HepG2 (cell line): ENCODE measurements at regions of chrX and their contacts with region 1.

Region 1: GRCh38 chrX:153609917-153610428 is 11.0 kb upstream of the CCNQ start:
- DNase-seq: peak; percentile 52
- ATAC-seq: peak; percentile 84
- H3K4me3 ChIP-seq: peak overlapping the region; percentile 26 to 58 (median 36); a peak in 4 of 6 replicates
- H3K27ac ChIP-seq: peak overlapping the region; percentile 72
- H3K4me1 ChIP-seq: peaks cover 18% of the 10 kb centered on the region
- H3K27me3 ChIP-seq: no peaks in the 10 kb centered on the region
- CTCF ChIP-seq: peak; percentile 94
- EP300 ChIP-seq: no peak
- POLR2A ChIP-seq: no peak
- RAD21 ChIP-seq: peak; percentile 88

Region 2: GRCh38 chrX:153560000-153560399 is 50.0 kb before region 1 on chrX:
- CTCF ChIA-PET with region 1: no interaction called
- POLR2A ChIA-PET with region 1: no interaction called
- in situ Hi-C with region 1: loop called (anchors 5 kb)
- intact Hi-C with region 1: no loop called
- DNase-seq: no peak
- ATAC-seq: no peak
- H3K4me3 ChIP-seq: no peak overlapping the region
- H3K27ac ChIP-seq: no peak overlapping the region
- H3K4me1 ChIP-seq: peaks cover 4% of the 10 kb centered on the region
- H3K27me3 ChIP-seq: peaks cover 0 to 35% of the 10 kb centered on the region in 2 experiments; a peak in 2 of 5 replicates
- CTCF ChIP-seq: no peak
- EP300 ChIP-seq: no peak
- POLR2A ChIP-seq: no peak
- RAD21 ChIP-seq: no peak

Region 3: DNA sequence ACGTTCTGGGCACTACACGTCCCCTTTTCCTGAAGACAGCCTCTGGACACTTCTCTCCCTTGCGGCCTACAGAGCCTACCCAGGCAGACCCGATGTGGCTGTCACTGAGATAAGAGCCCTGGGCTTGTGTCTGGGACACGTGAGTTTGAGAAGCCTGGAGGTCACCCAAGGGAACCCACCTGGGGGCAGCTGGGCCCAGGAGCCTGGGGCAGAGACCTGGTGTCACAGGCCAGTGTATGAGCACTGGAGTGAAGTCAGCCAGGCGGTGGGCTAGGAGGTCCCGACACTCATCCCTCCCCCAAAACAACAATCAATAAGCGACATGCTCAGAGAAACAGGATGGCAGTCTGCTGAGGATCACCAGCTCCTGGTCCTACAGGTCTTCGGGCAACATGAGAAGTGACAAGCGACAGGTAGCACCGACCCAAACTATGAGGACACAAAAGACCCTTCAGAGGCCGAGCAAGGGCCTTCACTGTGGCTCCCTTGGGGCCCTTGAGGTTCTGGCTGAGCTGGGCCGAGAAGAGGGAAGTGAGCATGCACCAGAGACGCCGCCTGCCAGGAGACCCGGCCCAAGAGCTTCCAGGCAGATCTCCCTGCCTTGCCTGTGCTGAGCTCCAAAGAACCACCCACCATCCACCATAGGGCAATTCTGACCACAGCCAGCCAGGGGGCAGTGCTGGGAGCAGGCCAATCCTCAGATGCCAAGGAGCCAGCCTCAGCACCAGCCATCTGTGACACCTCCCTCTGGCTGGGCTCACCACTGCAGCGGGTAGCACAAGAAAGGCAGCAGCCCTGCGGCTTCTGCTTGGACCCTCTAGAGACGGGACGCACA is 26.0 kb after region 1 on chrX:
- CTCF ChIA-PET with region 1: interaction called, 21 read pairs
- POLR2A ChIA-PET with region 1: interaction called, 13 read pairs
- in situ Hi-C with region 1: no loop called
- intact Hi-C with region 1: no loop called
- DNase-seq: peak; percentile 59
- ATAC-seq: peak; percentile 76
- H3K4me3 ChIP-seq: no peak overlapping the region; a peak in 1 of 6 replicates
- H3K27ac ChIP-seq: peak overlapping the region; percentile 43
- H3K4me1 ChIP-seq: peaks cover 75% of the 10 kb centered on the region
- H3K27me3 ChIP-seq: no peaks in the 10 kb centered on the region
- CTCF ChIP-seq: peak; percentile 71
- EP300 ChIP-seq: no peak
- POLR2A ChIP-seq: no peak
- RAD21 ChIP-seq: peak; percentile 76

Region 4: GRCh38 chrX:153649178-153649914 is 39.4 kb after region 1 on chrX:
- CTCF ChIA-PET with region 1: interaction called, 12 read pairs
- POLR2A ChIA-PET with region 1: interaction called, 96 read pairs
- in situ Hi-C with region 1: loop called (anchors 5 kb)
- intact Hi-C with region 1: loop called (anchors 1 kb)
- DNase-seq: peak; percentile 70
- ATAC-seq: peak; percentile 32
- H3K4me3 ChIP-seq: peak overlapping the region; percentile 69 to 79 (median 75); a peak in 5 of 6 replicates
- H3K27ac ChIP-seq: peak overlapping the region; percentile 79
- H3K4me1 ChIP-seq: peaks cover 50% of the 10 kb centered on the region
- H3K27me3 ChIP-seq: no peaks in the 10 kb centered on the region; a peak in 1 of 5 replicates
- CTCF ChIP-seq: peak; percentile 67
- EP300 ChIP-seq: no peak
- POLR2A ChIP-seq: no peak
- RAD21 ChIP-seq: peak; percentile 72

Region 5: GRCh38 chrX:153667956-153668396 is 58.0 kb after region 1 on chrX:
- CTCF ChIA-PET with region 1: interaction called, 17 read pairs
- POLR2A ChIA-PET with region 1: no interaction called
- in situ Hi-C with region 1: no loop called
- intact Hi-C with region 1: loop called (anchors 2 kb)
- DNase-seq: peak; percentile 51
- ATAC-seq: peak; percentile 84
- H3K4me3 ChIP-seq: peak overlapping the region in 2 of 3 experiments; percentile 7 to 16; a peak in 1 of 6 replicates
- H3K27ac ChIP-seq: no peak overlapping the region
- H3K4me1 ChIP-seq: peaks cover 43% of the 10 kb centered on the region
- H3K27me3 ChIP-seq: peaks cover 0 to 14% of the 10 kb centered on the region in 2 experiments; a peak in 2 of 5 replicates
- CTCF ChIP-seq: peak; percentile 93
- EP300 ChIP-seq: no peak
- POLR2A ChIP-seq: no peak
- RAD21 ChIP-seq: peak; percentile 74

Region 6: DNA sequence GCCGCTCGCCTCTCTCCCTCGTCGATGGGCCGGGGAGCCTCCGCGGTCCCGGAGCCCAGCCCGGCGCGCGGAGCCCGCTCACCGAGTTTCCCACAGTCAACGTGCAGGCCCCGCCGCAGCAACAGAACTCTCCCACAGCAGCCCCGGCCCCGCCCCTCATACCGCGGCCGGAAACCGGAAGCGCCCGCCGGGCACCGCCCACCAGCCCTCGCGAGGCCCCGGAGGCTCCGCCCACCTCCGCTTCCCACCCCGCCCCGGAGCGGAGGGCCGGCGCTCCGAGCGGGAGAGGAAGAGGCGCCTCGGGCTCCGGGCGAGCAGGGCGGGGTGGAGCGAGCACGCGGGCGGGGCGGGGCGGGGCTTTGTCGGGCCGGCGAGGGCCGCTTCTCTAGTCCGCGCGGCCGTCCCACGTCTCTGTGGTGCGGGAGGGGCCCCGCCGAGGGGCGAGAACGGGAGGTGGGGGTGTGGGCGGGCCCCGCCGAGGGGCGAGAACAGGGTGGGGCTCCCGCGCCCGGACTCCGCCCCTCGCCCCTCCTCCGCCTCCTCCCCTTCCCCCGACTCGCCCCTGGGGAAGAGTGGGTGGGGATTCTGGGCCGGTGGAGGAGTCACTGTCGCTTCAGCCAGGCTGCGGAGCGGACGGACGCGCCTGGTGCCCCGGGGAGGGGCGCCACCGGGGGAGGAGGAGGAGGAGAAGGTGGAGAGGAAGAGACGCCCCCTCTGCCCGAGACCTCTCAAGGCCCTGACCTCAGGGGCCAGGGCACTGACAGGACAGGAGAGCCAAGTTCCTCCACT is 114.5 kb after region 1 on chrX and contains the starts of genes ABCD1 and BCAP31:
- CTCF ChIA-PET with region 1: no interaction called
- POLR2A ChIA-PET with region 1: no interaction called
- in situ Hi-C with region 1: no loop called
- intact Hi-C with region 1: no loop called
- DNase-seq: peak; percentile 78
- ATAC-seq: peak; percentile 32
- H3K4me3 ChIP-seq: peak within 1 kb of the TSS; percentile 63 to 79 (median 79)
- H3K27ac ChIP-seq: peak within 1 kb of the TSS; percentile 92
- H3K4me1 ChIP-seq: peaks cover 53% of the 10 kb centered on the region
- H3K27me3 ChIP-seq: no peaks in the 10 kb centered on the region
- CTCF ChIP-seq: 0 out of 2 replicates have a peak, but pooled peaks have one; percentile 13
- EP300 ChIP-seq: no peak
- POLR2A ChIP-seq: peak in 1 of 2 experiments; percentile 94; a peak in 2 of 4 replicates
- RAD21 ChIP-seq: peak; percentile 25; the same call in 1 of the 2 replicates
- total RNA-seq, gene ABCD1: 10.1 and 15.9 TPM in 2 replicates
- total RNA-seq, gene BCAP31: 101 and 178 TPM in 2 replicates